Activated CD4-positive, alpha-beta T cell treated with anti-CD3 and anti-CD28 coated beads for 36 hours (primary cell): ENCODE measurements at regions of chr1 and their contacts with region 1.

Region 1: DNA sequence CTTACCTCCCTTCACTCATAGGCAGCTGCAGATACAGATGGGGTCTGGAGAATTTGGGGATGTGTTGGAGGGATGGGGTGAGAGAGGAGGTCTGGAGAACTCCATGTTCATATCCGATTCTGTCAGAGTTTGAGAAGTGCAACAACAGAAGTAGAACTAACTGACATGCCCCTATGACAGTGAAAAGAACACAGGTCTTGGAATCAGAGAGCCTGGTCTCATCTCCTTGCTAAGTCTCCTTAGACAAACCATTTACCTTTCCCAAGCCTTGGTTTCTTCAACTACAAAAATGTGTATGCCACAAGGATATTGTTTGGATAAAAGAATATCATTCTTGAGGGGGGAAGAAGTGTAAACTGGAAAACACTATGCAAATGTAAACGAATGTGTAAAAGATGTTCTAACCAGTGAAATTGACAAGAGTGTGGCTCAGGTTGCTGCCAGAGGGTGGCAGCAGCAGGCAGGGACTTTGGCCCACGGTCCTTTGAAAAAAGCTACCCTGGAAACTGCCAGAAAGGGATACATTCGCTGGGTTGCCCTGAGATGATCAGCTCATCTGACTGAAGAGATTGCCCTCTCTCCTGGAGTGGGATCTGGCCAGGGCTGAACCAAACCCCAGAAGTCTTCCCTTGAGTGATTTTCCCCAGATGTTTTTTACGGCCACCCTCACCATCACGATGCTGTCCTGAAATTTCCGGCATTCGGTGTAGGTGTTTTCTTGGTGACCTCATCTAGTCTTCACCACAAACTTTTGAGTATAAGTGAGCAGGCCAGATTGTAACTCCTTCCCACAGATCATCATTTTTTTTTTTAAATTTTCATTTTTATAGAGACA is 17.0 kb upstream of the CD2 start:
- DNase-seq: peak; percentile 86
- ATAC-seq: peak; percentile 56
- H3K4me3 Mint-ChIP-seq: peak overlapping the region; percentile 71
- H3K27ac Mint-ChIP-seq: peak overlapping the region; percentile 98
- H3K4me1 Mint-ChIP-seq: peaks cover 57% of the 10 kb centered on the region
- H3K27me3 Mint-ChIP-seq: no peaks in the 10 kb centered on the region

Region 2: GRCh38 chr1:116570358-116571200 is 166.7 kb before region 1 on chr1 and contains the start of gene CD58:
- CTCF ChIA-PET with region 1: interaction called, 4 read pairs
- POLR2A ChIA-PET with region 1: interaction called, 3 read pairs
- intact Hi-C with region 1: loop called in 1 of 2 experiments (anchors 5 kb)
- DNase-seq: peak; percentile 93
- ATAC-seq: peak; percentile 77
- H3K4me3 Mint-ChIP-seq: peak within 1 kb of the TSS; percentile 91
- H3K27ac Mint-ChIP-seq: peak within 1 kb of the TSS; percentile 87
- H3K4me1 Mint-ChIP-seq: peaks cover 64% of the 10 kb centered on the region
- H3K27me3 Mint-ChIP-seq: peaks cover 8% of the 10 kb centered on the region
- total RNA-seq, gene CD58: 12.4 to 16.0 TPM

Region 3: DNA sequence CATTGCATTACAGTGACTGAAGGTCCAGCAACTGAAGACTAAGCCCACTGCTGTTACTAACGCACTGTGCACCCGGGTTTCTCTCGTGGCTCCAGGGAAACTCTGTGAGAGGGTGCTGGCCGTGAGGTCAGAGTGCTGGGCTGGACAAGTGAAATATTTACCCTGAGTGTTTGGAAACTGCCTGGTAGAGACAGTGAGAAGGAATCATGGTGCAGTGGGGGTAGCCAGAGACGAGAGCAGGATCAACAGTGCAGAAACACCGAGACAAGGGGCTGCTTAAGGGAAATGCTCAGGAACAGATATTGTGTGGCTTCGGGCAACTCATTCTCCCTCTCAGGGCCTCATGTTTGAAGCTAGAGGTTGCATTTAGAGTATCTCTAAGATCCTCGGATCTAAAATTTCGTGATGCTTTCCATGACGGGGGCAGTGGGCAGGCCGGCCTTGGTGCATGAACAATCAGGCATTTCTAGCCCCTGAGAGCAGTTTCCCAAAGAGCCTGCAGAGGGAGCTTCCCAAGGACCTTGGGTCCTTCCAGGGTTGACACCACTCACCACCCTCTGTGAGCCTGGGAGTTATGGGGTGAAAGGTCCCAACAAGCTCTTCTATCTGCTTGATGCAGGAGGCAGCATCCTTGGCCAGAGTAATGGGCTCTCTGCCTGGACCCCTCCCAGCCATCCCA is 26.7 kb after region 1 on chr1:
- CTCF ChIA-PET with region 1: interaction called, 213 read pairs
- POLR2A ChIA-PET with region 1: interaction called, 482 read pairs
- intact Hi-C with region 1: loop called (anchors 1 kb)
- DNase-seq: peak; percentile 83
- ATAC-seq: peak; percentile 6
- H3K4me3 Mint-ChIP-seq: peak overlapping the region; percentile 93
- H3K27ac Mint-ChIP-seq: peak overlapping the region; percentile 100
- H3K4me1 Mint-ChIP-seq: peaks cover 92% of the 10 kb centered on the region
- H3K27me3 Mint-ChIP-seq: no peaks in the 10 kb centered on the region

Region 4: GRCh38 chr1:116785006-116785405 is 47.8 kb after region 1 on chr1:
- CTCF ChIA-PET with region 1: no interaction called
- POLR2A ChIA-PET with region 1: no interaction called
- intact Hi-C with region 1: no loop called
- DNase-seq: no peak
- ATAC-seq: no peak
- H3K4me3 Mint-ChIP-seq: no peak overlapping the region
- H3K27ac Mint-ChIP-seq: no peak overlapping the region
- H3K4me1 Mint-ChIP-seq: peaks cover 17% of the 10 kb centered on the region
- H3K27me3 Mint-ChIP-seq: no peaks in the 10 kb centered on the region

Region 5: GRCh38 chr1:116806245-116806644 is 69.0 kb after region 1 on chr1:
- CTCF ChIA-PET with region 1: interaction called, 8 read pairs
- POLR2A ChIA-PET with region 1: interaction called, 15 read pairs
- intact Hi-C with region 1: loop called in 1 of 2 experiments (anchors 2 kb)
- DNase-seq: peak; percentile 92
- ATAC-seq: peak; percentile 68
- H3K4me3 Mint-ChIP-seq: peak overlapping the region; percentile 85
- H3K27ac Mint-ChIP-seq: peak overlapping the region; percentile 94
- H3K4me1 Mint-ChIP-seq: peaks cover 85% of the 10 kb centered on the region
- H3K27me3 Mint-ChIP-seq: no peaks in the 10 kb centered on the region

Region 6: GRCh38 chr1:116847688-116848531 is 110.7 kb after region 1 on chr1:
- CTCF ChIA-PET with region 1: no interaction called
- POLR2A ChIA-PET with region 1: interaction called, 4 read pairs
- intact Hi-C with region 1: loop called (anchors 1 kb)
- DNase-seq: peak; percentile 57
- ATAC-seq: peak; percentile 99
- H3K4me3 Mint-ChIP-seq: no peak overlapping the region
- H3K27ac Mint-ChIP-seq: peak overlapping the region; percentile 19
- H3K4me1 Mint-ChIP-seq: peaks cover 32% of the 10 kb centered on the region
- H3K27me3 Mint-ChIP-seq: peaks cover 2% of the 10 kb centered on the region

Region 7: DNA sequence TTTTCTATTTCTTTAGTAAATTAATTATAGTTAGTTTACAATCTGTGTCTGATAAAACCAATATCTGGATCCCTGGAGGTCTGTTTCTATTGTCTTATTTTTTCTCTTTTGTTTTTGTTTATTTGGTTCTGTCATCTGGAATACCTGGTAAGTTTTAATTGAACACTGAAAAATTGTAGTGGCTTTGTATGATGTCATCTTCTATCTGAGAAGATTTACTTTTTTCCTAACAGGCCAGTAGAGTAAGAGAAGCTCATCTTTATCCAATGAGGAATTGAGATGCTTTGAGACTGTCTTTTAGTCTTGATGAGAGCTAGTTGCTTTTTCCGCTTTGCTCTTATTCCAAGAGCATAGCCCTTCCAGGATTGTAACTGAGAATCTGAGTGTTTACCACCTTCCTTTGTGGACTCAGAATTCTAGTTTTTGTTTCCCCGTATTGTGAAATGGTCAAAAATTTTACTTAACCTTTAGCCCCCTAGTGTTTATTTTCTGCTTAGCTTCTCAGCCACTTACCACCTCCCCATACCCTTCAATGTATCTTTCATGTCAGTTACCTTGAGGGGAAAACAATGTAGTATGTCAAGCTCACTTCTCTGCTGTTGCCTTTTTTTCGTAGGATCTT is 197.5 kb after region 1 on chr1:
- CTCF ChIA-PET with region 1: interaction called, 8 read pairs
- POLR2A ChIA-PET with region 1: interaction called, 5 read pairs
- intact Hi-C with region 1: loop called (anchors 1 to 5 kb)
- DNase-seq: no peak
- ATAC-seq: no peak
- H3K4me3 Mint-ChIP-seq: no peak overlapping the region
- H3K27ac Mint-ChIP-seq: peak overlapping the region; percentile 77
- H3K4me1 Mint-ChIP-seq: peaks cover 7% of the 10 kb centered on the region
- H3K27me3 Mint-ChIP-seq: no peaks in the 10 kb centered on the region